ENCODE measurements at regions of chr5 and their contacts with region 1.

Region 1: DNA sequence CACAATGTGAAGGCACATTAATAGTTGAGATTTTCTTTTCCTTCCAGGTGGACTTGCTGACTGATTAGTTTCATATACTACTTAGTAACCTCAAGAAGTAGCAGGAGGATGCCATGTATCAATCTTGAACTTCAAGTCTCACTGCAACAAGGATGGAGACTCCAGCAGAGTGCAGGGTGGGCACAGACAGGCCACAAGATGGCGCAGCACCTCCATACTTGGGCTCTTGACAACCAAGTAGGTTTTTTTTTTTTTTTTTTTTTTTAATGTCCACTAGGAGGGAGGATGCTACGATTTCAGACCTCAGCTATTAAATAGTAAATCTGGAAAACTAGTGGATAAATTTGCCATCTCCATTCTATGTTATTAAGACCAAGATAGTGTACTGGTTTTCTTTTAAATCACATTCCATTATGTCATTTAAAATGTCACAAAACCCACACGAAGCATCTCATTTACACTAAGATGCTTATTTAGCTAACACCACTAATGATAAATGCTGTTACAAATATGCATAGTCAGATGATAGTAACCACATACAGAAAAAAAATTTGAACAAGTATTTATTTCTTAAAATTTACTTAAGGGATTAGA is 58.6 kb downstream of the IL6ST start:
- DNase-seq: peak; percentile 63
- H3K4me3 ChIP-seq: no peak overlapping the region
- H3K27ac ChIP-seq: no peak overlapping the region
- H3K4me1 ChIP-seq: no peaks in the 10 kb centered on the region
- H3K27me3 ChIP-seq: no peaks in the 10 kb centered on the region
- CTCF ChIP-seq: peak; percentile 91 to 97

Region 2: GRCh38 chr5:55897905-55898304 is 38.3 kb before region 1 on chr5:
- CTCF ChIA-PET with region 1: no interaction called
- dilution Hi-C with region 1: no loop called
- in situ Hi-C with region 1: no loop called
- intact Hi-C with region 1: no loop called
- DNase-seq: peak; percentile 33
- H3K4me3 ChIP-seq: peak overlapping the region in 2 of 3 experiments; percentile 0 to 18
- H3K27ac ChIP-seq: no peak overlapping the region
- H3K4me1 ChIP-seq: peaks cover 19% of the 10 kb centered on the region
- H3K27me3 ChIP-seq: no peaks in the 10 kb centered on the region
- CTCF ChIP-seq: no peak

Region 3: DNA sequence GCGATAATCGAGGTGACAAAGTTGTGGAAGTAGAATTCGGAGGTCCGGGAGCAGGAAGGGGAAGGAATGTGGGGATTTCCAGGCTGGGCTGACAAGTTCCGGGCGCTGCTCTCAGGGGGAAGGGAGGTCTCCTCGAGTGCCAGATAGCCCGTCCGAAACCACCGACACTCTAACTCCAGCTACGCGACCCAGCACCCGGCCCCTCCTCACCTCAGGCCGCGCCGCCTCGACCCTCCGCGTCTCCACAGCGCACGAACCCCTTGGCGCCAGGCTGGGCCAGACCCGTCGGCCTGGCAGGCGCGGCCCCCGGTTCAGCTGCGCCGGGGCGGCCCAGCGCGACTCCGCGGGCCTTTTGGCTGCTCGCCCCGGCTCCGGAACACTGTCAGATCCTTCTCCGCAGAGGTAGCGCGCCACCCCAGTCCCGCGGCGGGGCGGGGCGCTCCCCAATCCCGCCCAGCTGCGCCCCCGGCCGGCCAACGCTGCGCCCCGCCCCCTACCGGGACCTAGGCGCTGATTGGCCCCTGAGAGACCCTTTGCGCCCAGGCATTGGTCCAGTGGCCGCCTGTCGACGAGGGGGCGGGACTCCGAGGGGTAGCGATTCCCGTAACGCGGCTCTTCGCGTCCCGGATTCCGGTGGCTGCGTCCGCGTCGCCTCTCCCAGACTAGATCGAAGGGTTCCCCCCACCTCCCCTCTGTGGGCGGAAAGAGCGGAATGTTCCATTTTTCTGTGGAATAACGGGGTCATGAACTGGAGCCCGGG is 58.6 kb after region 1 on chr5 and contains the start of gene IL6ST:
- CTCF ChIA-PET with region 1: no interaction called
- dilution Hi-C with region 1: no loop called
- in situ Hi-C with region 1: no loop called
- intact Hi-C with region 1: no loop called
- DNase-seq: peak; percentile 96
- H3K4me3 ChIP-seq: peak within 1 kb of the TSS; percentile 91 to 100 (median 99)
- H3K27ac ChIP-seq: peak within 1 kb of the TSS; percentile 99
- H3K4me1 ChIP-seq: peaks cover 30% of the 10 kb centered on the region
- H3K27me3 ChIP-seq: no peaks in the 10 kb centered on the region
- CTCF ChIP-seq: peak in 1 of 2 donors; percentile 12
- total RNA-seq, gene IL6ST: 103 to 108 TPM

Region 4: GRCh38 chr5:56056875-56057274 is 120.7 kb after region 1 on chr5:
- CTCF ChIA-PET with region 1: interaction called, 23 read pairs
- dilution Hi-C with region 1: no loop called
- in situ Hi-C with region 1: no loop called
- intact Hi-C with region 1: no loop called
- DNase-seq: no peak
- H3K4me3 ChIP-seq: no peak overlapping the region
- H3K27ac ChIP-seq: no peak overlapping the region
- H3K4me1 ChIP-seq: peaks cover 8% of the 10 kb centered on the region
- H3K27me3 ChIP-seq: peaks cover 29% of the 10 kb centered on the region
- CTCF ChIP-seq: no peak

Region 5: GRCh38 chr5:56190497-56190896 is 254.3 kb after region 1 on chr5:
- CTCF ChIA-PET with region 1: no interaction called
- dilution Hi-C with region 1: no loop called
- in situ Hi-C with region 1: loop called in 1 of 2 experiments (anchors 10 kb)
- intact Hi-C with region 1: no loop called
- DNase-seq: peak; percentile 72
- H3K4me3 ChIP-seq: no peak overlapping the region
- H3K27ac ChIP-seq: no peak overlapping the region
- H3K4me1 ChIP-seq: peaks cover 4% of the 10 kb centered on the region
- H3K27me3 ChIP-seq: peaks cover 6% of the 10 kb centered on the region
- CTCF ChIP-seq: no peak